ENCODE measurements at regions of chr16 and their contacts with region 1.

Region 1: GRCh38 chr16:53061701-53062159 is 6.9 kb downstream of the CHD9 start:
- DNase-seq: peak; percentile 87
- H3K4me3 ChIP-seq: peak overlapping the region; percentile 53
- H3K27ac ChIP-seq: peak overlapping the region; percentile 92
- H3K4me1 ChIP-seq: peaks cover 100% of the 10 kb centered on the region
- CTCF ChIP-seq: peak; percentile 44

Region 2: GRCh38 chr16:53099318-53100130 is 37.8 kb after region 1 on chr16:
- CTCF ChIA-PET with region 1: interaction called, 3 read pairs
- POLR2A ChIA-PET with region 1: interaction called, 77 read pairs
- intact Hi-C with region 1: loop called (anchors 1 kb)
- DNase-seq: peak; percentile 70
- H3K4me3 ChIP-seq: peak overlapping the region; percentile 69
- H3K27ac ChIP-seq: peak overlapping the region; percentile 97
- H3K4me1 ChIP-seq: peaks cover 81% of the 10 kb centered on the region
- CTCF ChIP-seq: no peak

Region 3: GRCh38 chr16:53207810-53208752 is 146.4 kb after region 1 on chr16:
- CTCF ChIA-PET with region 1: no interaction called
- POLR2A ChIA-PET with region 1: interaction called, 12 read pairs
- intact Hi-C with region 1: no loop called
- DNase-seq: peak; percentile 88
- H3K4me3 ChIP-seq: peak overlapping the region; percentile 88
- H3K27ac ChIP-seq: peak overlapping the region; percentile 94
- H3K4me1 ChIP-seq: peaks cover 33% of the 10 kb centered on the region
- CTCF ChIP-seq: peak; percentile 83

Measured in OCI-LY7 (cell line).